ENCODE measurements at regions of chr1 and their contacts with region 1.

Region 1: GRCh38 chr1:186605762-186606350 is 74.4 kb downstream of the PTGS2 start:
- DNase-seq: no peak
- H3K4me3 ChIP-seq: no peak overlapping the region
- CTCF ChIP-seq: peak; percentile 80

Region 2: DNA sequence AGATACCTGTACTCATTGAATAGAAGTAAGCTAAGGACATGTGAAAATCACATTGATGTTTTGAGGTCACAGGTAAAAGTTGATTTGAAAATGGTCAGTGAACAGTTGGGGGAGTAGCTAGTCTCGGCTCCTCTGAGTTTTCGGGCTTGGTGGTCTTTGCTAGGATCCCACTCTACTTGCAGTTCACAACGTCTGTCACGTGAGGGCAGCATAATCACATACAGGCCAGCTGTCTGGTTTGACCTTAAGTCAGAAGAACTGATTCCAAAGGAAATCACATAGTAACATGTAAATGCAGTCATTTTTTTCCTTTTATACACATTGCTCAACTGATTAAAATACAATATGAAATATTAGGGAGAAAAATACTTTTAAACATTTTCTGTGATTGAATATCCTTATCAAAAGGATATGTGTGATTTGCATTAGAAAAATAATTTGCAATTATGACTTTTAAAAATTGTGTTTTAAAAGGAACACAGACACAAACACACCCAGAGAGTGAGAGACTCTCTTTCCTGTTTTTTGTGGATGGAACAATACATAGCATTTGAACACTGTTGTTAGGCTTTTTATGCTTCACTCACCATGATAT is 123.1 kb before region 1 on chr1:
- CTCF ChIA-PET with region 1: interaction called, 12 read pairs
- POLR2A ChIA-PET with region 1: no interaction called
- DNase-seq: no peak
- H3K4me3 ChIP-seq: no peak overlapping the region
- CTCF ChIP-seq: peak; percentile 87

Region 3: DNA sequence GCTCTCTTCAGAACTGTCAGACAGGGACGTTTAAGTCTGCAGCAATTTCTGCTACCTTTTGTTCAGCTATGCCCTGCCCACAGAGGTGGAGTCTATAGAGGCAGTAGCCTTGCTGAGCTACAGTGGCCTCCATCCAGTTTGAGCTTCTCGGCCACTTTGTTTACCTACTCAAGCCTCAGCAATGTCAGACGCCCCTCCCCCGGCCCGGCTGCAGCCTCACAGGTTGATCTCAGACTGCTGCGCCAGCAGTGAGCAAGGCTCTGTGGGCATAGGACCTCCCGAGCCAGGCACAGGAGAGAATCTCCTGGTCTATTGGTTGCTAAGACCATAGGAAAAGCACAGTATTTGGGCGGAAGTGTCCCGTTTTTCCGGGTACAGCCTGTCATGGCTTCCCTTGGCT is 55.0 kb before region 1 on chr1:
- CTCF ChIA-PET with region 1: no interaction called
- POLR2A ChIA-PET with region 1: no interaction called
- DNase-seq: no peak
- H3K4me3 ChIP-seq: no peak overlapping the region
- CTCF ChIP-seq: no peak

Region 4: DNA sequence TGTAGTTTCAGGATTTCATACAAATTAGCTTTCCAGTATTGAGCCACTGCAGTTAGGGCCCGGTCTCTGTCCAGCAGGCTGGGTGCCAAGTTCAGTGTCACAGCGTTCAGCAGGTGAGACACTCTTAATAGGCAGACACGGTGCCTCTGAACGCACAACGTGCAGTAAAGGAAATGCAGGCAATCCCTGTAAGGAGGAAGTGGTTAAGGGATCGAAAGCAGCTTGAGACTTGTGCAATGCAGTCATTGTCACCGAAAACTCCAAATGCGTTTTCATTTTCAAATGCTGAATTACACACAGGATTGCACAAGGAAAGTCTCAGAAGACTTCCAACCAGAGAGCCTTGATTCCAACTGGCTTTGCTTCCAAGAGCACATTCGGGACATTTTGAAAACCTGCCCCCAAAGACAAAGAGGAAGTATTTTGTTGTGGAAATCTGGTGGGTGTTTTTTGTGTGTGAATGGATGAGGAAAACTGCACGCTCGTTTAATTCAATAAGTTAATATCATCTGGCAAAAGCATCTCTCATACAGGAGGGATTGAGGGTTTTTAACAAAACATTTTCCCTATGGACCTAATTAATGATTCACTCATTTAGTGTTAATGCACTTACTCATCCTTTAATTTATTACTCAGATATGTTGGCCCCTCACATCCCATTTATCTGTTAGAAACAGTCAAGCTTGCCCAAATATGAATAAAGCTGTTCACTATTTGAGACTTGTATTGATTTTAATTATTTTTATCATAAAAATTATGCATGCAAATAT is 12.7 kb after region 1 on chr1:
- CTCF ChIA-PET with region 1: interaction called, 23 read pairs
- POLR2A ChIA-PET with region 1: no interaction called
- DNase-seq: no peak
- H3K4me3 ChIP-seq: peak overlapping the region; percentile 45
- CTCF ChIP-seq: no peak

Region 5: DNA sequence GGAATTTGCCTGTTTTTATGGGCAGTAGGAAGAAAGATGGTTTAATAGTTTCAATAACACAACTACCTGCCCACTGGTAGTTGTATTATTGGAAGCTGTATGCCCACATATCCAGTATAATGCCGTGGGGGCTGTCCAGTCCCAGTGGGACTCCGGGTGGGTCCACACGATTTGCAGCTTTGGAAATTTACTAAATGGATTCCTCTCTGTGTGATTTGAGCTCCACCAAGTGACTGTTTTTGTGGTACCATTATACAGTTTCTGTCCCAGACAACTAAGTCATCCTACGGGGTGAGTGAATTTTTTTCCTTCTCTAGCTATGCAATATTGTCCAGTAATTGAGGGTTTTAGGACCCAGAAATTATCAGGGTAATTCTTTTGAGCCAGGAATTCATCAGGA is 309.7 kb after region 1 on chr1:
- CTCF ChIA-PET with region 1: interaction called, 12 read pairs
- POLR2A ChIA-PET with region 1: no interaction called
- DNase-seq: no peak
- H3K4me3 ChIP-seq: no peak overlapping the region
- CTCF ChIP-seq: no peak